Activated T-helper 2 cell treated with anti-CD3 and anti-CD28 coated beads, Interferon-gamma antibody, Interleukin-2, Interleukin-4, amounts not matched to agents 10 μg/mL and 5 μg/mL and 100 μg/mL, durations not matched to agents 14 hours and 24 hours and 36 hours (primary cell): ENCODE measurements at regions of chr2 and their contacts with region 1.

Region 1: DNA sequence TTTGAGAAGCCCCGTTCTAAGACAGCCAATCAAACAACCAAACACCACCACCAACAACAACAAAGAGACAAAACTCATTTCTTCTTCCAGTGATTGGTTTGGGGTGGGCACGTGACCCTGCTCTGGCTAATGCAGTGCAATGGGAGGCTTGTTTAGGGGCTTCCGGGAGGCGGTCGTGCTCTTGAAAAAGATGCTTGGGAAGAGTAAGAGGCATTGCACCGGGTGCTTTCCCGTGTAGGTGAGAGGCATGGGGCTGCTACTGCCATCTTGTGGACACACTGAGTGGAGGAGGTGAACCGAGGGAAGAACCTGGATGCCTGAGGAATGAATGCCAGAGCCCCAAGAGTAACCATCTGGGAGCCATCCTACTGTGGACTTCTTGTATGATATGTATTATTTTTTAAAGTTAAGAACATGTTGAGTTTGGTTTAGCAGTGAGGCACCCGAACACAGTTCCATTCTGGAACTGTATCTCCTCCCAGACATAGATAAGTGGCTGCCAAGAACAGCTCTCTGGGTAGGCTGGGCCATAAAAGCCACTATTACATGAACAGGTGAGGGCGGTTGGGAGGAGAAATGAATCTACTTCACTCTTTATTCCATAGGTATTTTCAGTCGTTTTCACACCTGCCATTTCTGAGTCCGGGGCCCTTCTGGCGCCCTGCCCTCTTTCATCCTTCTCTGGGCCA is 19.1 kb upstream of the ARHGAP25 start:
- DNase-seq: no peak
- H3K4me3 Mint-ChIP-seq: no peak overlapping the region
- H3K27ac Mint-ChIP-seq: peak overlapping the region; percentile 60
- H3K4me1 Mint-ChIP-seq: peaks cover 73% of the 10 kb centered on the region
- H3K27me3 Mint-ChIP-seq: no peaks in the 10 kb centered on the region

Region 2: GRCh38 chr2:68521037-68521436 is 194.5 kb before region 1 on chr2:
- intact Hi-C with region 1: loop called (anchors 5 kb)
- DNase-seq: no peak
- H3K4me3 Mint-ChIP-seq: no peak overlapping the region
- H3K27ac Mint-ChIP-seq: peak overlapping the region; percentile 27
- H3K4me1 Mint-ChIP-seq: peaks cover 22% of the 10 kb centered on the region
- H3K27me3 Mint-ChIP-seq: no peaks in the 10 kb centered on the region

Region 3: DNA sequence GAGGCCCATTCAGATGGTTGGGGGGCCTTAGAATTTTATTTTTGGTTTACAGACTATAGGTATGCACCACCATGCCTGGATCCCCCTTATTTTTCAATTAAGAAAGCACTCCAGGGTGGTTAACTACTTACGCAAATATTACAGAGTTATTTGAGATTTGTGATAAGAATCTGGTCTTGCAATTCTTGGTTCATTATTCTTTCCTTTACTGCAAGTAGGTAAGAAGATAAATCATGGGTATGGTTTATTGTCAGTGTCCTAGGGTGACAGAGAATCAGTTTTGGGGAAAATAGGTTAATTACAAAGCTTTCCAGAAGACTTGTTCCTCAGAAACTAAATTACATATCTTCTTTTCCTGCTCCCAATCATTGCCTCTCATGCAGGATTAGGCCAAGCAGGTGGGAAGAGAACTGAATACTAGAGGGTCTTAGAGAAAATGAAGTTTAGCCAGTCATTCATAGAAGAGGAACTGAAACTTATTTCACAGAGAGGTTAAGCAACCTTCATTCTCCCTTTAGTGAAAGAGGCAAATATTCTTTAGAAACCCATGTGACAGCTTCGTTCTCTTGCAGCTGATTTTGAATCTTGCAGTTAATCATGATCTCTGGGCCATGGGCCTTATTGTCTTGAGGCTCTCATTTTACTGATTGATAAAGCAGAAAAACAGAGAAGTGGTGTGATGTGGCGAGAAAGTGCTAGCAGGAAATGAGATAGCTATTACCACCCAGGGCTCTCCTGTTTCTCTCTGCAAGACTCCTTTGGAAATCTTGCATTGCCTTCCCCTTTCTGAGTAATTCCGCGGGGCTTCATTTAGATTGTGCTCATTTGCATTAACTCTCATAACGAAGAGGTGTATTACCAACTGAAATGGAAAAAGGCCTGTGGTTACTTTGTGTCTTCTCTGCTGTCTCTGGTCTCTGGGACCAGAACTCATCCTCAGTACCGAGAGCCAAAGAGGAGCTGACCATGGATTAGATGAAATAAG is 25.7 kb before region 1 on chr2:
- intact Hi-C with region 1: loop called (anchors 2 kb)
- DNase-seq: no peak
- H3K4me3 Mint-ChIP-seq: no peak overlapping the region
- H3K27ac Mint-ChIP-seq: peak overlapping the region; percentile 67
- H3K4me1 Mint-ChIP-seq: peaks cover 20% of the 10 kb centered on the region
- H3K27me3 Mint-ChIP-seq: peaks cover 14% of the 10 kb centered on the region

Region 4: GRCh38 chr2:68700560-68700959 is 14.9 kb before region 1 on chr2:
- intact Hi-C with region 1: no loop called
- DNase-seq: no peak
- H3K4me3 Mint-ChIP-seq: no peak overlapping the region
- H3K27ac Mint-ChIP-seq: no peak overlapping the region
- H3K4me1 Mint-ChIP-seq: peaks cover 13% of the 10 kb centered on the region
- H3K27me3 Mint-ChIP-seq: peaks cover 25% of the 10 kb centered on the region

Region 5: DNA sequence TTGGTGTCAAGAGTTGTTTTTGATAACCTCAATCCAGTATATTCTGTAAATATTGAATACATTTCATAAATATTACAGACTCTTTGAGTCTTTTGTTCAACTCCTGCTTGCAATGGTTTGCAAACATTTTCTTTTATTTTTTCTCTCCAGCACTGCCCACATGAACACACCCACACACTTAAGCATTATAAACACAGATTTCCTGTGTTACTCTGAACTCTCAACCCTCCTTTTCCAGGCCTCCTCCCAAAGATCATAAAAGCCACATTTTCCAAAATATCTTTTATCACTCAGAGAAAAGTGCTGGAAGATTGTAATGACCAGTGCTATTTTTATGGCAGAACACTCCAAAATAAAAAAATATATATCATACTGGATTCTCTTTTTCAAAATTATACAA is 39.6 kb after region 1 on chr2:
- intact Hi-C with region 1: no loop called
- DNase-seq: no peak
- H3K4me3 Mint-ChIP-seq: peak overlapping the region; percentile 27
- H3K27ac Mint-ChIP-seq: peak overlapping the region; percentile 6
- H3K4me1 Mint-ChIP-seq: peaks cover 73% of the 10 kb centered on the region
- H3K27me3 Mint-ChIP-seq: no peaks in the 10 kb centered on the region

Region 6: GRCh38 chr2:68766376-68766845 is 50.9 kb after region 1 on chr2:
- intact Hi-C with region 1: loop called (anchors 1 kb)
- DNase-seq: peak; percentile 70
- H3K4me3 Mint-ChIP-seq: peak overlapping the region; percentile 68
- H3K27ac Mint-ChIP-seq: peak overlapping the region; percentile 93
- H3K4me1 Mint-ChIP-seq: peaks cover 91% of the 10 kb centered on the region
- H3K27me3 Mint-ChIP-seq: no peaks in the 10 kb centered on the region

Region 7: DNA sequence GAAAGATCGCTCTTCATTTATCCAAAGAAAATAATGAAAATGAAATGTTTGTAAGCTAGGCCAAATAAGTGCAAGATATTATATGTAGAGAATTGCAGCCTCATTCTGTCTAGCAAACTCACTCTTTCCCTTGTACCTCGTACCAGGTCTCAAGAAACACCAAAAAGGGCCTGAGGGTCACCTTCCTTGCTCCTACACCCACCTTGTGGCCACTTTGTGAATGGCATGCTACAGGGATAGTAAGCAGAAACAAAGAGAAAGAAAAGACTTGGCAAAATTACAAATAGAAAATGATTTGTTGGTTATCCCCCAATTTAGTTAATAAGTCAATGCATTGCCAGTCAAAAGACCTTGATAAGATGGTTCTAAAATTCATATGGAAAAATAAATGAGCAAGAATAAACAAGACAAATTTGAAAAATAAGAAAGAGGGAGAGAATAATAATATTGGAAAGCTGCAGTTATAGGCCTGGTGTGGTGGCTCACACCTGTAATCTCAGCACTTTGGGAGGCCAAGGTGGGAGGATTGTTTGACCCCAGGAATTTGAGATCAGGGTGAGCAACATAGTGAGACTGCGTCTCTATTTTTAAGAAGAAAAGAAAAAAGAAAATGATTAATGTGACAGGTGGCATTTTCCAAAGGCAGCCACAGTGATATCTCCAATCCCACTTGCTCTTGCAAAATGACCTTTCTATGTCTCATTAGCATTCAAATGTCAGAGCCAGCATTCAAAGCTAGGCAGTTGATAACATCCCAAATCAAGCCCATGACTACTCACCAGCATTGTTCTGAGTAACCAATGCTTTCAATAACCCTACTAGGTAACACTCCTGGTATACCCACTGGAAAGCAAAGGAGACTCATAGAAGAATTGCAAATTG is 194.5 kb after region 1 on chr2:
- intact Hi-C with region 1: loop called (anchors 1 kb)
- DNase-seq: peak; percentile 62
- H3K4me3 Mint-ChIP-seq: no peak overlapping the region
- H3K27ac Mint-ChIP-seq: peak overlapping the region; percentile 70
- H3K4me1 Mint-ChIP-seq: peaks cover 33% of the 10 kb centered on the region
- H3K27me3 Mint-ChIP-seq: no peaks in the 10 kb centered on the region